HCT116 (cell line): ENCODE measurements at regions of chr10 and their contacts with region 1.

Region 1: DNA sequence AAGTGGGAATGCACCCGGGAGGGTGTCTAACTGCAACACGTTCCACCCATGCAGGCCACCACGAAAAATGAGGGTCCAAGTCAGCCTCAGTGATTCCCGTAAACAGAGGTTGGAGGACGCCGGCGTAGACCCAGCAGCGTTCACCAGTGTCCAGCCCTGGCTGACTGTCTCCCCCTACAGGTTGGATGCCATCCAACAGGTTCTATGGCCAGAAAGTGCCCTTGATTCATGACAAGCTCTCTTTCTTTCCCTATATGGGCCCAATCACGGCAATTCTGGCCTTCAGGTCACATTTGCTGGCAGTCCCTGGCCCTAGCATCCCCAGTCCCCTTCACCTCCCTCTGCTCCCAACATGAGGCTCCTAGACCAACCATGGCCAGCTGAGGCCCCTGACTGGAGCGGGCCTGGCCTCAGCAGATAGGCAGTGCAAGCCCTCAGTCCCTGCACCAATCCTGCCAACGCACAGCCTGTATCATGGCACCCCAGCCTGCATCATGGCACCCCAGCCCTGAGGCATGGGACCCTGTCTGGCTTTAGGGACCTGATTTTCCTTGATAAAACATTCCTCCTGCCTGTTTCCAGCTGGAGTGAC is 227.4 kb downstream of the GRID1 start:
- DNase-seq: peak; percentile 23
- ATAC-seq: peak; percentile 92
- H3K4me3 ChIP-seq: no peak overlapping the region
- H3K27ac ChIP-seq: no peak overlapping the region
- H3K4me1 ChIP-seq: no peaks in the 10 kb centered on the region
- H3K27me3 ChIP-seq: no peaks in the 10 kb centered on the region
- CTCF ChIP-seq: peak; percentile 62 to 92 (median 85)
- POLR2A ChIP-seq: no peak
- RAD21 ChIP-seq: peak; percentile 84

Region 2: GRCh38 chr10:85548034-85548433 is 591.1 kb before region 1 on chr10:
- CTCF ChIA-PET with region 1: no interaction called
- POLR2A ChIA-PET with region 1: no interaction called
- RAD21 ChIA-PET with region 1: no interaction called
- intact Hi-C with region 1: loop called (anchors 1 kb)
- DNase-seq: peak; percentile 52
- ATAC-seq: peak; percentile 100
- H3K4me3 ChIP-seq: no peak overlapping the region
- H3K27ac ChIP-seq: no peak overlapping the region
- H3K4me1 ChIP-seq: no peaks in the 10 kb centered on the region
- H3K27me3 ChIP-seq: peaks cover 18% of the 10 kb centered on the region
- CTCF ChIP-seq: peak; percentile 52 to 63 (median 61); a peak in 5 of 6 replicates
- POLR2A ChIP-seq: no peak
- RAD21 ChIP-seq: peak; percentile 84

Region 3: GRCh38 chr10:85791818-85792532 is 347.2 kb before region 1 on chr10:
- CTCF ChIA-PET with region 1: interaction called, 6 read pairs
- POLR2A ChIA-PET with region 1: no interaction called
- RAD21 ChIA-PET with region 1: no interaction called
- intact Hi-C with region 1: loop called (anchors 1 kb)
- DNase-seq: no peak
- ATAC-seq: peak; percentile 72
- H3K4me3 ChIP-seq: no peak overlapping the region
- H3K27ac ChIP-seq: no peak overlapping the region
- H3K4me1 ChIP-seq: no peaks in the 10 kb centered on the region
- H3K27me3 ChIP-seq: no peaks in the 10 kb centered on the region
- CTCF ChIP-seq: peak; percentile 32 to 47 (median 38); a peak in 4 of 6 replicates
- POLR2A ChIP-seq: no peak
- RAD21 ChIP-seq: peak; percentile 47

Region 4: DNA sequence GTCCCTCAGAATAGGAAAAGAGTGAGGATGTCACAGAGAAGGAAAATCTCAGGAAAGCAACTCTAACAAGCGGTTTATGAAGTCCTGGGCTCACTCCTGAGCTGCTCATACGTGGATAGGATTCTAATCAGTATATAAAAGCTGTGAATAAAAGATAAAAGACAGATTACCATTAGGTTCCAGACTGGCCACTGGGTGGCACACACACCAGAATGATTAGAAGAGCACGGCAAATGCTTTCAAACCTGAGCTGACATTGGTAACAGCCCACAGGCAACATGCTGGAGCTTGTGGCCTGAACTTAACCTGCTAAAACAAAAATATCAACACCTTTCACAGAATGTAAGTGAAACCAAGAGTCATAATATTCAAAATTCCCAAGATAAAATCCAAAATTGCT is 143.4 kb before region 1 on chr10:
- CTCF ChIA-PET with region 1: interaction called, 8 read pairs
- POLR2A ChIA-PET with region 1: no interaction called
- RAD21 ChIA-PET with region 1: interaction called in 1 of 2 experiments, 3 read pairs
- intact Hi-C with region 1: loop called (anchors 2 kb)
- DNase-seq: peak; percentile 29
- ATAC-seq: peak; percentile 89
- H3K4me3 ChIP-seq: no peak overlapping the region
- H3K27ac ChIP-seq: no peak overlapping the region
- H3K4me1 ChIP-seq: no peaks in the 10 kb centered on the region
- H3K27me3 ChIP-seq: peaks cover 8% of the 10 kb centered on the region; the same call in 1 of the 2 replicates
- CTCF ChIP-seq: peak; percentile 58 to 64 (median 59); a peak in 5 of 6 replicates
- POLR2A ChIP-seq: no peak
- RAD21 ChIP-seq: peak; percentile 65

Region 5: GRCh38 chr10:86888585-86889381 is 749.6 kb after region 1 on chr10:
- CTCF ChIA-PET with region 1: no interaction called
- POLR2A ChIA-PET with region 1: no interaction called
- RAD21 ChIA-PET with region 1: no interaction called
- intact Hi-C with region 1: no loop called
- DNase-seq: no peak
- ATAC-seq: no peak
- H3K4me3 ChIP-seq: no peak overlapping the region
- H3K27ac ChIP-seq: no peak overlapping the region
- H3K4me1 ChIP-seq: peaks cover 0 to 8% of the 10 kb centered on the region in 2 experiments; a peak in 2 of 4 replicates
- H3K27me3 ChIP-seq: no peaks in the 10 kb centered on the region
- CTCF ChIP-seq: no peak
- POLR2A ChIP-seq: no peak
- RAD21 ChIP-seq: no peak